T-cell (primary cell): ENCODE measurements at regions of chr6 and their contacts with region 1.

Region 1: DNA sequence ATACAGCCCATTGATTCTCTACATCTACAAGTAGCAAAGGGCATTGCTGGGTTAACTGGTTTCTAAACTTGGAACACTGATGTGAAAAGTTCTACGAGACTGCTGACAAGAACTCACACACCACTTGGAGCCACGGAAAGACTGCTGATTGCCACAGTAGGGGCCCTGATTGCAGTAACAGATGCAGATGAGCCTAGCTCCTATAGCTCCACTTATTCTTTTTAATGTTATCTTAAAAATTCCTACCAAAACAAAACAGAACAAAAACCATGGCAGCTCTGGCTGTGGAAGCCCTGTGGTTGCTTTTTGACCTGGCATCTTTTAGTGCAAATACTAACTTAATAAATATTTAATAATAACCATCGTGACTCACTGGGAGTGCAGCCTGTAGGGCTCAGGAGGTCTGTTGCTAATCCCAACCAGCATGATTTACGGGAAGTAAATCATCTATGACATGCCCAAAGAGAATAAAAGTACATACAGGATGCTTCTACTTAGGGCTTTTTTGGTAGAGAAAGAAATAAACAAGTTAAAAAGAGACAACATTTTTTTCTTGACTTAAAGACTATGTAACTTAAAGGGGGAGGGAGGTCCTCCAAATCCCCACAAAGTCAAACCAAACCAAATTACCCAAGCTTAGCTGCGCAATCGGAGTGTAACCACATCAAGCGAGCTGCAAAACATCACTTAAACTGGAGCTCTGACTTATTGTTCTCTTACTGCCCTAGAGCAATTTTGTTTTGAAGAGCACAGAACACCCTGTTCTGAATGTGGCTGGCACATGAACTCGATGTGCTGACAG is 87.2 kb downstream of the FKBP5 start:
- DNase-seq: peak; percentile 42 to 95 (median 74)
- ATAC-seq: peak; percentile 85 to 92 (median 88)
- H3K4me3 ChIP-seq: peak overlapping the region; percentile 43 to 46
- H3K4me3 Mint-ChIP-seq: peak overlapping the region; percentile 75 to 80 (median 75)
- H3K27ac ChIP-seq: peak overlapping the region; percentile 83
- H3K27ac Mint-ChIP-seq: peak overlapping the region; percentile 93 to 96
- H3K4me1 ChIP-seq: peaks cover 58 to 61% of the 10 kb centered on the region in 2 experiments
- H3K4me1 Mint-ChIP-seq: peaks cover 79 to 91% (median 84%) of the 10 kb centered on the region in 3 donors
- H3K27me3 ChIP-seq: no peaks in the 10 kb centered on the region
- H3K27me3 Mint-ChIP-seq: no peaks in the 10 kb centered on the region

Region 2: DNA sequence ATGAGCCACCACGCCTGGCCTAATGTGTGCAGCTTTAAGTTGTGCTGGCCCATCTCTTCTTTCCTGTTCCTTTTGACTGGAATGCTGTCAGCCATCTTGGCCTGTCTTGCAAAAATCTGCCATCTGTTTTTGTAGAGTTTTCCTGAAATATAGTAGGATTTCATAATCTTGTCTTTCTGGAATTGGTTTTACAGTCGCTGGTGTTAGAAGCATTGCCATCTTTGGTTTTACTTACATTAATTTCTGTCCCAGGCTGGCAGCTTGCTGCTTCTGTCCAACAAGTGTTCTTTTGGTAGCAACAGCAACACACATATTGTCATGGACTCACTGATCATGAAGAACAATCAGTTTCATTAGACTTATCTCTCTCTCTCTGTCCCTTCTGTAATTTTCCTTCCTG is 59.7 kb before region 1 on chr6:
- CTCF ChIA-PET with region 1: no interaction called
- POLR2A ChIA-PET with region 1: no interaction called
- DNase-seq: no peak
- ATAC-seq: no peak
- H3K4me3 ChIP-seq: no peak overlapping the region
- H3K4me3 Mint-ChIP-seq: no peak overlapping the region
- H3K27ac ChIP-seq: no peak overlapping the region
- H3K27ac Mint-ChIP-seq: no peak overlapping the region
- H3K4me1 ChIP-seq: peaks cover 0 to 3% of the 10 kb centered on the region in 2 experiments
- H3K4me1 Mint-ChIP-seq: peaks cover 4 to 14% (median 6%) of the 10 kb centered on the region in 3 donors
- H3K27me3 ChIP-seq: peaks cover 0 to 3% of the 10 kb centered on the region in 2 experiments
- H3K27me3 Mint-ChIP-seq: no peaks in the 10 kb centered on the region

Region 3: GRCh38 chr6:35583893-35584688 is 17.4 kb before region 1 on chr6:
- CTCF ChIA-PET with region 1: interaction called, 3 to 11 read pairs
- POLR2A ChIA-PET with region 1: no interaction called
- DNase-seq: peak; percentile 46 to 88 (median 69)
- ATAC-seq: peak; percentile 67 to 77 (median 74)
- H3K4me3 ChIP-seq: no peak overlapping the region
- H3K4me3 Mint-ChIP-seq: peak overlapping the region in 1 of 3 donors; percentile 39
- H3K27ac ChIP-seq: peak overlapping the region; percentile 32
- H3K27ac Mint-ChIP-seq: peak overlapping the region; percentile 86 to 87
- H3K4me1 ChIP-seq: peaks cover 17 to 36% of the 10 kb centered on the region in 2 experiments
- H3K4me1 Mint-ChIP-seq: peaks cover 59 to 62% (median 61%) of the 10 kb centered on the region in 3 donors
- H3K27me3 ChIP-seq: no peaks in the 10 kb centered on the region
- H3K27me3 Mint-ChIP-seq: no peaks in the 10 kb centered on the region

Region 4: GRCh38 chr6:35590622-35591066 is 10.9 kb before region 1 on chr6:
- CTCF ChIA-PET with region 1: interaction called, 5 to 22 read pairs
- POLR2A ChIA-PET with region 1: interaction called, 4 to 29 read pairs
- DNase-seq: no peak
- ATAC-seq: no peak
- H3K4me3 ChIP-seq: no peak overlapping the region
- H3K4me3 Mint-ChIP-seq: peak overlapping the region in 1 of 3 donors; percentile 67
- H3K27ac ChIP-seq: peak overlapping the region; percentile 42
- H3K27ac Mint-ChIP-seq: peak overlapping the region; percentile 84 to 92
- H3K4me1 ChIP-seq: peaks cover 54 to 83% of the 10 kb centered on the region in 2 experiments
- H3K4me1 Mint-ChIP-seq: peaks cover 90 to 95% (median 95%) of the 10 kb centered on the region in 3 donors
- H3K27me3 ChIP-seq: no peaks in the 10 kb centered on the region
- H3K27me3 Mint-ChIP-seq: no peaks in the 10 kb centered on the region

Region 5: DNA sequence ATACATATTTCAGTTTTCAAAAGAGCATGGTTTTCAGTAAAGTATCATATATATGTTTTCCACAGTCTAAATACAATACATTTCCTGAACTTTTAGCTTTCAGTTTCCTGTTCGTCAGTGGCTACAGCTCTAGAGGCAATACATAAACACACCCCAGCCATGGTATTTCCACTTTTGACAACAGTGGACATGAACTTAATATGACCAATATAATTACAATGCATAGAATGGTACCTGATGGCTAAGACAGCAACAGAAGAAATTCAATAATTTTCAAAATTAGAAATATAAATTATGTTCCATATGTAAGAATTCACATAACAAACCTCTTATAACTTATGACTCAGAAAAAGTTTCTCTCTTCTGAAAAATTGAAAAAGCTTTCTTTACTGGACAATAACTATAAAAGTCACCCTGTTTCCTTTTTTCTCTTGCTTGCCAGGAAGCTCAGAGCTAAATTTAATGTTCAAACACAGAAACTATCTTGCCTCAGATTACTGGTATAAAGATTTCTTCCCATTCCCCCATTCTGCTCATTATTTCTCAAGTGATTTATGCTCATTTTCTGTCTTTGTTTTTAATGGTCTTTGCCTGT is 68.0 kb after region 1 on chr6:
- CTCF ChIA-PET with region 1: interaction called in 1 of 2 experiments, 13 read pairs
- POLR2A ChIA-PET with region 1: interaction called in 1 of 2 experiments, 4 read pairs
- DNase-seq: peak in 1 of 35 experiments; percentile 57
- ATAC-seq: peak; percentile 53 to 73 (median 70)
- H3K4me3 ChIP-seq: no peak overlapping the region
- H3K4me3 Mint-ChIP-seq: peak overlapping the region; percentile 66 to 73 (median 71)
- H3K27ac ChIP-seq: peak overlapping the region; percentile 77
- H3K27ac Mint-ChIP-seq: peak overlapping the region; percentile 96
- H3K4me1 ChIP-seq: peaks cover 45 to 52% of the 10 kb centered on the region in 2 experiments
- H3K4me1 Mint-ChIP-seq: peaks cover 46 to 68% (median 59%) of the 10 kb centered on the region in 3 donors
- H3K27me3 ChIP-seq: no peaks in the 10 kb centered on the region
- H3K27me3 Mint-ChIP-seq: no peaks in the 10 kb centered on the region